Stomach (tissue), 19 donors: ENCODE measurements at regions of chr3 and their contacts with region 1.

Region 1: DNA sequence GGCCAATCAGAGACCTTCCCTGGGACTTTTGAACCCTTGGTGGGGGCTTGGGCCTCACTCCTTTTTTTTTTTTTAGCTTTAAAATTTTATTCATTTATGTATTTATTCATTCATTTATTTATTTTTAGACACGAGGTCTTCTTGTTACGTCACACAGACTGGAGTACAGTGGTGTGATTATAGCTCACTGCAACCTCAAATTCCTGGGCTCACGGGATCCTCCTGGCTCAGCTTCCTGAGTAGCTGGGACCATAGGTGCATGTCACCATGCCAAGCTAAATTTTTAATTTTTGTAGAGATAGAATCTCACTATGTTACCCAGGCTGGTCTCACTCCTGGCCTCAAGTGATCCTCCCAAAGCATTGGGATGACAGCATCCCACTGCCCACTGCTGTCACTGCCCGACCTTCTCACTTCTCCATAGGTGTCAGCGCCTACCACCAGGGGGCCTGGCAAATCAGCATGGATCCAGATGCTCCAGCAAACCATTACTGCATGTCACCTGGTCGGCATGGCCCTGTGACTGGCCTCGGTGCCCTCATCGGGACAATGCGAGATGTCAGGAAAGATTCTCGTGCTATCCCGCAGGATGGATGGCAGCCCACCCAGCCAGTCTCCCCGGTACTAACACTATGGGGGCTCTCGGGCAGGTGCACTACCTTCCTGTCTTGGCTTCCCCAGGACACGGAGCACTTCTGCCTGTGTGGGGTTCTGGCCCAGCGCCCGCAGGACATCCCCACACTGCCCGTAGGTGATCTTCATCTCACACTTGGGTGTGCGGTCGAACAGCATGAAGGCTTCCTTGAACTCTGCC is 3.0 kb downstream of the MYL3 start:
- DNase-seq: peak in 1 of 2 donors; percentile 49
- H3K4me3 ChIP-seq: no peak overlapping the region
- H3K27ac ChIP-seq: no peak overlapping the region
- H3K4me1 ChIP-seq: peaks cover 0 to 5% (median 2%) of the 10 kb centered on the region in 4 donors
- H3K27me3 ChIP-seq: peaks cover 0 to 22% (median 0%) of the 10 kb centered on the region in 3 donors
- CTCF ChIP-seq: peak in 4 of 7 experiments; percentile 8 to 29 (median 22)
- EP300 ChIP-seq: no peak
- POLR2A ChIP-seq: no peak

Region 2: DNA sequence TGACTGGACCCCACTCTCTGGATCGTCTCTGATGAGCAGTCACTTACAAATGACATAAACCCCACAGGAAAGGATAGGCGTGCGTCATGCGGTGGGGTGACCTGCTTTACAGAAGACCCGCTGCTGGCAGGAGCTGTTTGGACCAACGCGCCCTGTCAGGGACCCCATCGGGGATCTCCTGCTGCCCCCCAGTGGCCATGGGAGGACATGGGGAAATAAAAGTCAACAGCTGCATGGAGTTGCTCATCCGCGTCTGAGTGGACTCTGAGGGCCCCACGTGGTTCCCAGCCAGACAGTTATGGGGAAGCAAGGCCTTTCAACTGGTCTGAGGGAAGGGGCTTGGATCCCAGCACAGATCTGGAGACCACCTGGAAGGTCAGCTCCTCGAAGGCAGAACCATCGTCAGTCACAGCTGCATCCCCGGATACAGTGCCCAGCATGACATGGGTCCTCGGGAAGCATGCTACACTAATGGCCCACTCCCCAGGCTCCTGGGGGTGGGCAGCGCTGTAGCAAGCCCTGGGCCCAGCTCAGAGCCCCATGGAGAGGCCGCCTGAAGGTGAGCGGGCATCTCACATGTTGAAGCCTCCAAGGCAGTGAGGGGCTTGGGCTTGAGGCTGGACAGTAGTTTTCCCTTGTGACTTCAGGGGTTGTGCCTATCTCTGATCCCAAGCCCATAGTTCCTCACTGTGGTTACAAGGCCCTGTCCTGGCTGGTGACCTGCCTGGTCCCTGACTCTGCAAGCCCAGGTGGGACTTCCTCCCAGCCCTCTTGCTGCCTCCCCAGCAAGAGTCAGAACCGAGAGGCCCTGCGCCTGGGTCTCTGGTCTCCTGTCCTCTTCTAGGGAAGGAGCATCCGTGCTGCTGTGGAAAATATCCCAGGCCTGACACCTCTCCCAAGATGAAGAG is 49.6 kb after region 1 on chr3:
- intact Hi-C with region 1: loop called (anchors 5 kb)
- DNase-seq: peak; percentile 82 to 93
- H3K4me3 ChIP-seq: no peak overlapping the region
- H3K27ac ChIP-seq: no peak overlapping the region
- H3K4me1 ChIP-seq: peaks cover 10 to 34% (median 20%) of the 10 kb centered on the region in 4 donors
- H3K27me3 ChIP-seq: no peaks in the 10 kb centered on the region
- CTCF ChIP-seq: peak in 5 of 7 experiments; percentile 70 to 83 (median 73)
- EP300 ChIP-seq: no peak
- POLR2A ChIP-seq: no peak

Region 3: DNA sequence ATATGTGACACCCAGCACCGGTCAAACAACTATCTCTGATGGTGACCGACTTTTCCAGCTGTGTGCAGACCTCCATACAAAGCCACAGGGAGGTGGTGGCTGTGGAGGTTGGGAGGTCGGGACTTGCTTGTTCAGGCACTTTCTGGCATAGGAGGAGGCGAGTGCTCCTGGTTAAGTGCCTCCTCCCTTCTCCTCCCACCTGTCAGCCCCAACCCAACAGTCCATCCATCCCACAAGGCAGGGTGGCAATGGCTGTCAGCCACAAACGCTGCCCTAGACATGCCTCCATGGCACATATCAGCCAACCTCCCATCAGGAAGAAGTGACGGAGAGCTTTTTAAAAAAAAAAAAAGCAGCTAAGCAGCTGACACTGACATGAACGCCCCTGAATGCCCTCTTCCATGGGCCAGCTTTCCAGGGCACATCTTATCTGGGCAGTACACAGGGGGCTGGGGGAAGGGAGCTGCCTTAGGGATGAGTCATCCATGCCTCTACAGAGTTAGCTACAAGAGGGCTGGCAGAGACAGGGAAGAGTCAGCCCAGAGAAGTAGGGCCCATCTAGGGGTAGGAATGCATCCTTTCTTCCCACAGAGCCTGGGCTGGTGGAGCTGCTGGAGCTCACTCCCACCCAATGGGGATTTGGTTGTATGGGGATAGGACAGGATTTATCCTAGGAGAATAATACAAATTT is 75.1 kb after region 1 on chr3:
- intact Hi-C with region 1: no loop called
- DNase-seq: peak; percentile 78 to 92
- H3K4me3 ChIP-seq: no peak overlapping the region
- H3K27ac ChIP-seq: peak overlapping the region; percentile 77 to 88 (median 87)
- H3K4me1 ChIP-seq: peaks cover 78 to 100% (median 93%) of the 10 kb centered on the region in 4 donors
- H3K27me3 ChIP-seq: no peaks in the 10 kb centered on the region
- CTCF ChIP-seq: peak in 4 of 7 experiments; percentile 16 to 32 (median 20)
- EP300 ChIP-seq: peak; percentile 42
- POLR2A ChIP-seq: no peak